AG04450 (cell line): ENCODE measurements at regions of chr2 and their contacts with region 1.

Region 1: GRCh38 chr2:73212448-73213176 is 1.4 kb upstream of the SMYD5 start:
- DNase-seq: peak; percentile 55
- H3K4me3 ChIP-seq: no peak overlapping the region
- H3K27ac ChIP-seq: no peak overlapping the region
- H3K27me3 ChIP-seq: peaks cover 4% of the 10 kb centered on the region
- CTCF ChIP-seq: peak; percentile 90

Region 2: GRCh38 chr2:73202156-73203054 is 10.2 kb before region 1 on chr2 and contains the start of gene NOTO:
- CTCF ChIA-PET with region 1: interaction called, 11 read pairs
- POLR2A ChIA-PET with region 1: interaction called, 4 read pairs
- DNase-seq: no peak
- H3K4me3 ChIP-seq: 0 out of 2 replicates have a peak within 1 kb of the TSS, but pooled peaks have one; percentile 7
- H3K27ac ChIP-seq: no peak within 1 kb of the TSS
- H3K27me3 ChIP-seq: peaks cover 49% of the 10 kb centered on the region
- CTCF ChIP-seq: no peak
- polyA plus RNA-seq, gene NOTO: not detected in 2 replicates

Region 3: DNA sequence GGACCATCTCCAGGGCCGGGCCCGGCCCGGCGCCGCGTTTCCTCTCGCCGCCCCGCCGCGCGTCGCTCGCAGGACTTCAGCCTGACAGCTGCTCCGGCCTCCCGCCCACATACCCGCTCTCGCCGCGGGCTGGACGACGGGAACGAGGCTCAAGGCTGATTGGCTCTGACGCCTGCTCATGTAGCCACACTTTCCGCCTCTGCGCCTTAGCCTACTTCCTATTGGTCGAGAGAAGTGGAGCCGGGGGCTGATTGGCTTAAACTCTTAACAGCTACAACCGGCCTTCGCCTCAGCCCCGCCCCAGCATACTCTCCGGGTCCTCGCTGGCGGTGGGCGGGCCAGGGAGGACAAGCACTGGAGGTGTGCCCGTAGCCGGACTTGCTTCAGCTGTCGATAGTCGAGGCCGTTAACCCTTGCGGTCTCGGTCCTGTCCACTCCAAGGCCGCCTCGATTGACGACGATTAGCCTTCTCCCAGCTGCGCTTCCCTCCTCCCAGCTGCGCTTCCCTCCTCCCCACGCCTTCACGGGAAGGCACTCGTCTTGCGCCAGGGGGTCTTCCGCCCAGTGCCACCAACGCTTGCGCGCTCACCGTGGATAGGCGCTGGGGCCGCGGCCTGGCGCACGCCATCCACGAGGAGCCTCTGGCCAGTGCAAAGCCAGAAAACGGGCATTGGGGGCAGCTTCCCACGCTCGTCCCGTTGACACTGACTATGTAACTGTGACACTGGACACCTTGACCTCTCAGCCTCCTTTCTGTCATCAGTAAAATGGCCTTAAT is 20.7 kb after region 1 on chr2 and contains the start of gene PRADC1:
- CTCF ChIA-PET with region 1: interaction called, 11 read pairs
- POLR2A ChIA-PET with region 1: interaction called, 6 read pairs
- DNase-seq: peak; percentile 99
- H3K4me3 ChIP-seq: peak within 1 kb of the TSS; percentile 94
- H3K27ac ChIP-seq: peak within 1 kb of the TSS; percentile 79
- H3K27me3 ChIP-seq: no peaks in the 10 kb centered on the region
- CTCF ChIP-seq: no peak
- polyA plus RNA-seq, gene PRADC1: 11.6 and 12.0 TPM in 2 replicates